Activated B cell treated with CpG ODN at 0.5 μM for 24 hours (primary cell): ENCODE measurements at regions of chr11 and their contacts with region 1.

Region 1: DNA sequence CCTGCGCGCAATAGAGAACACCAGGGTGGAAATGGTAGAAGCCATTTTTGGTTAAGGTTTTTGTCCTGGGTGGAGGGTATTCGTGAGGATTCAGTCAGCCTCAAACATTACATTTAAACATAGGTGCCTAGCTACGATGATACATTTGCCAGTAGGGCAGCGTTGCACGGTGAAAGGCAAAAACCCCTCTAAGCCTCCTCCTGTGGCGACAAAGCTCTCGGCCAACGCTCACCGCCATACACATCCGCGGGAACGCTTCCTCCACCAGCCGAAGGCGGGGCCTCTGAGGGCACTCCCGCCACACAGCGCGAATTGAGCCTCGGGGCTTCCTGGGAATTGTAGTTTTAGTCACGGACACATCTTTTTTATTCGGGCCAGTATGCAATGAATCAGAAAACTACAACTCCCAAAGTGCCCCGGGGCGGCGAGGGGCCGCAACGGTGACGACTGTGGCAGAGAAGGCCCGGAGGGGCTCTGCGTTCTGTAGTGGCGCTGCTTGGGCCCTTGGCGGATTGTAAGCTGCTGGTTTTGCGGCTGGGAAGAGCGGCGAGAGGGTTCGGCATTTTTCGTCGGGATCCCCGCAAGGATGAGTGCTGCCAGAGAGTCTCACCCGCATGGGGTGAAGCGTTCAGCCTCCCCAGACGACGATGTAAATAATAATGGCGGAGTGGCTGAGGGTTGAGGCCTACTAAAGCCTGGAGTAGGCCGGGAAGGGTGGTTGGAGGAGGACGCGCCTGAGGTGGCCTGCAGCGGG is at the start of gene C11orf58:
- DNase-seq: peak; percentile 86
- ATAC-seq: peak; percentile 97
- H3K4me3 Mint-ChIP-seq: peak within 1 kb of the TSS; percentile 74
- H3K27ac Mint-ChIP-seq: no peak within 1 kb of the TSS
- H3K4me1 Mint-ChIP-seq: peaks cover 21% of the 10 kb centered on the region
- H3K27me3 Mint-ChIP-seq: no peaks in the 10 kb centered on the region
- CTCF ChIP-seq: no peak
- total RNA-seq, gene C11orf58: 112 and 130 TPM in 2 replicates

Region 2: GRCh38 chr11:16430674-16431073 is 307.7 kb before region 1 on chr11:
- CTCF ChIA-PET with region 1: no interaction called
- POLR2A ChIA-PET with region 1: no interaction called
- intact Hi-C with region 1: no loop called
- DNase-seq: no peak
- ATAC-seq: no peak
- H3K4me3 Mint-ChIP-seq: no peak overlapping the region
- H3K27ac Mint-ChIP-seq: no peak overlapping the region
- H3K4me1 Mint-ChIP-seq: no peaks in the 10 kb centered on the region
- H3K27me3 Mint-ChIP-seq: no peaks in the 10 kb centered on the region
- CTCF ChIP-seq: no peak

Region 3: GRCh38 chr11:16605894-16606783 is 132.2 kb before region 1 on chr11:
- CTCF ChIA-PET with region 1: no interaction called
- POLR2A ChIA-PET with region 1: no interaction called
- intact Hi-C with region 1: loop called (anchors 1 kb)
- DNase-seq: peak; percentile 62
- ATAC-seq: peak; percentile 88
- H3K4me3 Mint-ChIP-seq: peak overlapping the region; percentile 75
- H3K27ac Mint-ChIP-seq: peak overlapping the region; percentile 63
- H3K4me1 Mint-ChIP-seq: peaks cover 30% of the 10 kb centered on the region
- H3K27me3 Mint-ChIP-seq: peaks cover 40% of the 10 kb centered on the region
- CTCF ChIP-seq: no peak

Region 4: GRCh38 chr11:17207317-17208258 is 469.2 kb after region 1 on chr11 and contains the start of gene PIK3C2A:
- CTCF ChIA-PET with region 1: no interaction called
- POLR2A ChIA-PET with region 1: interaction called, 6 read pairs
- intact Hi-C with region 1: loop called (anchors 2 kb)
- DNase-seq: peak; percentile 91
- ATAC-seq: peak; percentile 95
- H3K4me3 Mint-ChIP-seq: peak within 1 kb of the TSS; percentile 99
- H3K27ac Mint-ChIP-seq: peak within 1 kb of the TSS; percentile 99
- H3K4me1 Mint-ChIP-seq: peaks cover 40% of the 10 kb centered on the region
- H3K27me3 Mint-ChIP-seq: no peaks in the 10 kb centered on the region
- CTCF ChIP-seq: no peak
- total RNA-seq, gene PIK3C2A: 35.9 and 41.2 TPM in 2 replicates

Region 5: DNA sequence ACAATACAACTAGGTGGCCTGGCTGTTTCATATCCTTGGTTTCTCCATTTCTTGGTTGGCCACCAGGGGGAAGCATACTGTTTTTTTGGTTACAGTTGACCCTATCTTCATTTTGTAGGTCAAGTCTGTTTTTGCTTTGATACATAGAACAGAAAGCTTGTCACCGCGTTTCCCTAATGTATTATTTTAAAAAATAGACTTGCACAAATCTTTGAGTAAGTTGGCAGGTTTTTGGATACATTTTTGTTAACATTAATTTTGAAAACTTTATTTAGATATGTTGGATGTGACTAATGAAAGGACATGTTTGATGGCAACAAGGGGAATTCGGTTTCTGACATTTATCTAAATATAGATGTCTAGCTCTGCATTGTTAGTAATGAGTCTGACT is 616.2 kb after region 1 on chr11:
- CTCF ChIA-PET with region 1: no interaction called
- POLR2A ChIA-PET with region 1: no interaction called
- intact Hi-C with region 1: loop called (anchors 2 kb)
- DNase-seq: no peak
- ATAC-seq: no peak
- H3K4me3 Mint-ChIP-seq: peak overlapping the region; percentile 87
- H3K27ac Mint-ChIP-seq: no peak overlapping the region
- H3K4me1 Mint-ChIP-seq: peaks cover 32% of the 10 kb centered on the region
- H3K27me3 Mint-ChIP-seq: peaks cover 32% of the 10 kb centered on the region
- CTCF ChIP-seq: peak; percentile 45

Region 6: DNA sequence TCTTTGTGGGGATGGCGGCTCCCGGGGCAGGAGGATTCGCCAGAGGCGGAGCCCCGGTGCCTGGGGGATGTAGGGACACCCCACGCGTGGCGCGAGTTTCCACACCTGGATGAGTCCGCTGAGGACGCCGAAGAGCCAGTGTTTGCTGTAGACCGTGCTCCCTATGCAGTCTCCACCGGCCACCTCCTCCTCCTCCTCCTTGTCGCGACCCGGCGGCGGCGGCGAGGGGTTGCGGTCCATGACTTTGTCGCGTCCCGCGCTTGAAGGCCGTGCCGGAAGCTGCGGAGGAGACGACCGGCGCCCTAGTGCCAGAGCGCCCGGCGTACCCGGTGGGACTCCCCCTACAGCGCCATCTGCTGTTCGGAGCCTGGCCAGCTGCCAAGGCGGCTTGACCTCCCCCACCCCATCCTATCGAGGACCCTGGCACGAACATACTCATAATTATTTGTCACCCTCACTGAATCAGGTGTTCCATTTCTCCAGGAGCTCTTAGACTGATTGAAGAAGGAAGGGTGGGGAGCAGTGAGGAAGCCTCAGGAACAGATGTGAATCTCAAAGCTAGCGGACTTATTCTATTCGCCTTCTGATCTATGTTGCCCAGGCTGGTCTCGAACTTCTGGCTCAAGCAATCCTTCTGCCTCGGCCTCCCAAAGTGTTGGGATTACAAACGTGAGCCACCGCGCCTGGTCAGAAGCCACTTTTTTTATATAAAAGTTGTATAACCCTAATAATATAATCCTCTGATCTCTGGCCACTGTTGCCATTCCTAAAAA is 1367.6 kb after region 1 on chr11 and contains the start of gene SAAL1:
- CTCF ChIA-PET with region 1: no interaction called
- POLR2A ChIA-PET with region 1: no interaction called
- intact Hi-C with region 1: loop called (anchors 10 kb)
- DNase-seq: peak; percentile 91
- ATAC-seq: peak; percentile 97
- H3K4me3 Mint-ChIP-seq: peak within 1 kb of the TSS; percentile 91
- H3K27ac Mint-ChIP-seq: peak within 1 kb of the TSS; percentile 76
- H3K4me1 Mint-ChIP-seq: peaks cover 28% of the 10 kb centered on the region
- H3K27me3 Mint-ChIP-seq: peaks cover 14% of the 10 kb centered on the region
- CTCF ChIP-seq: no peak
- total RNA-seq, gene SAAL1: 34.4 and 39.7 TPM in 2 replicates